Activated CD4-positive, alpha-beta T cell treated with anti-CD3 and anti-CD28 coated beads, Interleukin-2, amount 10 ng/mL, durations not matched to agents 24 days and 14 days (primary cell): ENCODE measurements at regions of chr3 and their contacts with region 1.

Region 1: GRCh38 chr3:97764407-97765238 is at the start of gene ARL6:
- DNase-seq: peak; percentile 92
- H3K4me3 Mint-ChIP-seq: peak within 1 kb of the TSS; percentile 99
- H3K27ac Mint-ChIP-seq: peak within 1 kb of the TSS; percentile 97
- H3K4me1 Mint-ChIP-seq: peaks cover 21% of the 10 kb centered on the region
- H3K27me3 Mint-ChIP-seq: peaks cover 5% of the 10 kb centered on the region
- total RNA-seq, gene ARL6: 6.1 and 6.3 TPM in 2 replicates

Region 2: DNA sequence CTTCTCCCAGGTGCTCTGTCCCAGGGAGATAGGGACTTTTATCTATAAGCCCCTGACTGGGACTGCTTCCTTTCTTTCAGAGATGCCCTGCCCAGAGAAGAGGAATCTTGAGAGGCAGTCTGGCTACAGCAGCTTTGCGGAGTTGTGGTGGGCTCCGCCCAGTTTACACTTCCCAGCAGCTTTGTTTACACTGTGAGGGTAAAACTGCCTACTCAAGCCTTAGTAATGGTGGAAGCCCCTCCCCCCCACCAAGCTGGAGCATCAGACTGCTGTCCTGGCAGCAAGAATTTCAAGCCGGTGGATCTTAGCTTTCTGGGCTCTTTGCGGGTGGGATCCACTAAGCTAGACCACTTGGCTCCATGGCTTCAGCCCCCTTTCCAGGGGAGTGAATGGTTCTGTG is 253.8 kb before region 1 on chr3:
- intact Hi-C with region 1: no loop called
- DNase-seq: no peak
- H3K4me3 Mint-ChIP-seq: no peak overlapping the region
- H3K27ac Mint-ChIP-seq: no peak overlapping the region
- H3K4me1 Mint-ChIP-seq: no peaks in the 10 kb centered on the region
- H3K27me3 Mint-ChIP-seq: no peaks in the 10 kb centered on the region

Region 3: GRCh38 chr3:97821810-97822775 is 57.5 kb after region 1 on chr3 and contains the start of gene CRYBG3:
- intact Hi-C with region 1: loop called (anchors 2 kb)
- DNase-seq: peak; percentile 97
- H3K4me3 Mint-ChIP-seq: peak within 1 kb of the TSS; percentile 99
- H3K27ac Mint-ChIP-seq: peak within 1 kb of the TSS; percentile 95
- H3K4me1 Mint-ChIP-seq: peaks cover 32% of the 10 kb centered on the region
- H3K27me3 Mint-ChIP-seq: peaks cover 33% of the 10 kb centered on the region
- total RNA-seq, gene CRYBG3: 8.1 and 8.3 TPM in 2 replicates

Region 4: GRCh38 chr3:97848779-97849178 is 84.2 kb after region 1 on chr3:
- intact Hi-C with region 1: no loop called
- DNase-seq: no peak
- H3K4me3 Mint-ChIP-seq: no peak overlapping the region
- H3K27ac Mint-ChIP-seq: no peak overlapping the region
- H3K4me1 Mint-ChIP-seq: no peaks in the 10 kb centered on the region
- H3K27me3 Mint-ChIP-seq: no peaks in the 10 kb centered on the region

Region 5: DNA sequence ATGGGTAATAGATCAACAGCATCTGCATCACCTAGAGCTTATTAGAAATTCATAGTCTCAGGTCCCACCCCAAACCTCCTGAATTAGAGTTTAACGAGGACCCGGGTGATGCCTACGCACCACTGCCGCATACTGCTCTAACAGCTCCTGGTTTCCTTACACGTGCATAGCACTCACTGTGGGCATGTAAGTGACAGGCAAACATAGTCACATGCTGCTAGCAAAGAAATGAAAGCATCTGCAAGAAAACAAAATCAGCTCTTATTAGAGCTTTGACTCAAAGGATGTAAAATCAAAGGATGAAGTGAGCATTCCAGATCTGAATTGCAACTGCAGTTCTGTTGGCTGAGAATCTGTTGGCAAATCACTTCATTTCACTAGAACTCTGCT is 226.7 kb after region 1 on chr3:
- intact Hi-C with region 1: no loop called
- DNase-seq: peak; percentile 78
- H3K4me3 Mint-ChIP-seq: peak overlapping the region; percentile 74
- H3K27ac Mint-ChIP-seq: peak overlapping the region; percentile 80
- H3K4me1 Mint-ChIP-seq: peaks cover 33% of the 10 kb centered on the region
- H3K27me3 Mint-ChIP-seq: no peaks in the 10 kb centered on the region

Region 6: DNA sequence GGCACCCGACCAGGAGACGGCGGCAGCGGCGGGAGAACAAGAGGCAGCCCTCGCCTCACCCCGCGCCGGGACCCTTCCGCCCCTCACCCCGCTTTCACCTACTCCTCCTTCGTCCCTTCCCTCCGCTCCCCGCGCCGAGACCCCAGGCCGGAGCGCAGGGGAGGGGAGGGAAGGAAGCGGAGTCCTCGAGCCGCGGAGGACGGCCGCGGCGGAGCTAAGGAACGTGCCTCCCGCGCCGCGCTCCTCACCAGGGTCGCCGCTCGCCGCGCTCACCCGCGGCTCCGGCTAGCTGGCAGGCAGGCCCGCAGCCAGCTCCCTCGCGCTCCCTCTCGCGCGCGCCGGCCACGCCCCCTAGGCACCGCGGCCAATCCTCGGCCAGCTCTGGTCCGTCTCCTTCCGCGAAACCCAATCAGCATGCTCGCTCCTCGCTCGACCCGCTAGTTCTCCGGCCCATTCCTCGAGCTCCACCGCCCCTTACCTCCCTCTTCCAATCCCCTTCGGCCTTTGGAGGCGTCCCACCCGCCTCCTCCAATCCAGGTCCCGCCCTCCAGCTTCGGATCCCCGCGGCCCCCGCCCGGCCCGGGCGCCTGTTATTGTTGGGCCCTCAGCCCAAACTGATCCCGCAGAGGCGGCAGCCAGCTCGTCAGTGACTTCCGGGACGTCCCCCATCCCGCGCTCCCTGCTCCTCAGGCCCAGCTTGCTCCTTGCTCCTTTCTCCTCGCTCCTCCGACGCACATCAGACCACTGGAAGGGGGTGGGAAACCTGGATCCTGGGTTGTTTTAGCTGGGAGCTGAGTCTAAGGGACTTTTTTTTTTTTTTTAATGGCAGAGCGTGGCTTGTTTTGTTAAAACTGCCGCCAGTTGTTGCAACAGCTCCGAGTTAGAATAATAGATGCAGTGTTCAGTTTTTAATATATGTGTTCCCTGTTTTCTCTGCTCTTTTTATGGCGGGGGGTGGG is 1137.0 kb after region 1 on chr3 and contains the start of gene DCBLD2:
- intact Hi-C with region 1: loop called (anchors 2 kb)
- DNase-seq: peak; percentile 99
- H3K4me3 Mint-ChIP-seq: peak within 1 kb of the TSS; percentile 89
- H3K27ac Mint-ChIP-seq: peak within 1 kb of the TSS; percentile 77
- H3K4me1 Mint-ChIP-seq: peaks cover 14% of the 10 kb centered on the region
- H3K27me3 Mint-ChIP-seq: peaks cover 29% of the 10 kb centered on the region
- total RNA-seq, gene DCBLD2: 2.7 and 3.8 TPM in 2 replicates